Activated naive CD4-positive, alpha-beta T cell treated with anti-CD3 and anti-CD28 coated beads for 36 hours (primary cell): ENCODE measurements at regions of chr1 and their contacts with region 1.

Region 1: GRCh38 chr1:174159252-174160108 is at the start of gene RABGAP1L:
- DNase-seq: peak; percentile 94
- H3K4me3 Mint-ChIP-seq: peak within 1 kb of the TSS; percentile 83
- H3K27ac Mint-ChIP-seq: peak within 1 kb of the TSS; percentile 93
- H3K4me1 Mint-ChIP-seq: peaks cover 56% of the 10 kb centered on the region
- H3K27me3 Mint-ChIP-seq: no peaks in the 10 kb centered on the region
- total RNA-seq, gene RABGAP1L: 16.6 TPM

Region 2: DNA sequence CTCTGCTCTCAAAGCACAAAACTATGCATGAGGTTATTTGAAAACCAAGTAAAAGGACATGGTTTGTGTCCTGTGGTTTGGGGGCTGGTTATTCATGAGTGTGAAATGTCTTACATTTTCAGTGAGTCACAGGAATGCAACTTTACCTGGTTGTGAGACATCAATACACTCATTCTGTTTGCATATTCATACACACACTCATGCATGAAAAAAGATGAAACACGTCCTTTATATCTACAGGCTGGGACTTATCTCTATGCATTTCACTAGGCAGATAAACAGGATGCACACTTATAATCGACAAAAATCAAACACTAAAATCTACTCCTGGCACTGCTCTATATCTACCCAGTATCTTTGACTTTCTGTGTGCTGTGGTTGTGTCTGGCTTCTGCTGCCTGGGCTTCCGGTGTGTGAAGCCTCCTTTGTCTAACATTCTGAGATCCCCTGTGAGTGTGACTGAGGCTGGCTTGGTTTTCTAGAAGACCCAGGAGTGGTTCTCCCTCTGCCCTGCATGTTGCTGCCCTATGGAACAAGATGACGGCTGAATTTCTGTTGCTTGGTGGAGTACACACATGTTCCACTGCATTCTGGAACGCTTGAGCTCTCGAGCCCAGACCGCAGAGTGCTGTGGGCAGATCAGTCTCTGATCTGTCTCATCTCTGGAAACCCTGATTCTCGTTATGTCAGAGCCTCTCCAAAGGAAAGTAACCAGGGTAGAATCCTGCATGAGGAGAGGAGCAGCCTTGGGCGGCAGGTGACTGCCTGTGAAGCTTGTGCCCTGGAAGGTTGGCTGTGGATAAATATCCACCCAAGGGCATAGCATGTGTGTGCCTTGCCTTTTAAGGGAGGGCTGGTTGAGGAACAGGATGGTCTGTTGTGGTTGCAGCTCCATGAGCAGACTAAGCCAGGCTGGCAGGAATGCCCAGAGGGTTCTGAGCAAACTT is 1520.3 kb before region 1 on chr1:
- CTCF ChIA-PET with region 1: no interaction called
- intact Hi-C with region 1: loop called (anchors 10 kb)
- DNase-seq: peak; percentile 90
- H3K4me3 Mint-ChIP-seq: peak overlapping the region; percentile 42
- H3K27ac Mint-ChIP-seq: peak overlapping the region; percentile 93
- H3K4me1 Mint-ChIP-seq: peaks cover 73% of the 10 kb centered on the region
- H3K27me3 Mint-ChIP-seq: peaks cover 9% of the 10 kb centered on the region

Region 3: GRCh38 chr1:173202430-173203145 is 956.9 kb before region 1 on chr1:
- CTCF ChIA-PET with region 1: no interaction called
- intact Hi-C with region 1: loop called (anchors 5 kb)
- DNase-seq: peak; percentile 39
- H3K4me3 Mint-ChIP-seq: no peak overlapping the region
- H3K27ac Mint-ChIP-seq: no peak overlapping the region
- H3K4me1 Mint-ChIP-seq: peaks cover 37% of the 10 kb centered on the region
- H3K27me3 Mint-ChIP-seq: peaks cover 4% of the 10 kb centered on the region

Region 4: GRCh38 chr1:173714759-173715537 is 444.5 kb before region 1 on chr1 and contains the start of gene KLHL20:
- CTCF ChIA-PET with region 1: no interaction called
- intact Hi-C with region 1: loop called (anchors 2 kb)
- DNase-seq: peak; percentile 91
- H3K4me3 Mint-ChIP-seq: peak within 1 kb of the TSS; percentile 97
- H3K27ac Mint-ChIP-seq: peak within 1 kb of the TSS; percentile 96
- H3K4me1 Mint-ChIP-seq: peaks cover 9% of the 10 kb centered on the region
- H3K27me3 Mint-ChIP-seq: peaks cover 15% of the 10 kb centered on the region
- total RNA-seq, gene KLHL20: 13.0 to 14.9 TPM

Region 5: GRCh38 chr1:174022080-174022975 is 137.2 kb before region 1 on chr1 and contains the start of gene RC3H1:
- CTCF ChIA-PET with region 1: no interaction called
- intact Hi-C with region 1: loop called (anchors 1 kb)
- DNase-seq: peak; percentile 92
- H3K4me3 Mint-ChIP-seq: peak within 1 kb of the TSS; percentile 93
- H3K27ac Mint-ChIP-seq: peak within 1 kb of the TSS; percentile 94
- H3K4me1 Mint-ChIP-seq: peaks cover 32% of the 10 kb centered on the region
- H3K27me3 Mint-ChIP-seq: no peaks in the 10 kb centered on the region
- total RNA-seq, gene RC3H1: 24.2 to 27.1 TPM

Region 6: DNA sequence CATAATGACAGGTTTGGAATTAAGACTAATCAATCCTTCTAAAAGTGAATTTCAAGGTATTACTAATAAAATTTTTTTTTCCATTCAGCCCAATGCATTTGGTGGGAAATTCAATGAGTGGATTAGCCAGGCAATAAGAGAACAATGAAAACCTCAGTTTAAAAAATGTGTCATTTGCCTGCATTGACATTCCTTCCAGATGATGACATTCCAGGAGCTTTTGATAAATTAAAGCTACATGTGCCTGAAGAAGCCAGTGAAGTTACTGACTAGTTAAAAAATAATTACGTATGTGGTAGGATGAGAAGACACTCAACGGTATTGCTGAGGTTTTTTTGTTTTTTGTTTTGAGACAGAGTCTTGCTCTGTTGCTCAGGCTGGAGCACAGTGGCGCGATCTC is 99.4 kb before region 1 on chr1:
- CTCF ChIA-PET with region 1: no interaction called
- intact Hi-C with region 1: no loop called
- DNase-seq: no peak
- H3K4me3 Mint-ChIP-seq: no peak overlapping the region
- H3K27ac Mint-ChIP-seq: no peak overlapping the region
- H3K4me1 Mint-ChIP-seq: no peaks in the 10 kb centered on the region
- H3K27me3 Mint-ChIP-seq: no peaks in the 10 kb centered on the region

Region 7: DNA sequence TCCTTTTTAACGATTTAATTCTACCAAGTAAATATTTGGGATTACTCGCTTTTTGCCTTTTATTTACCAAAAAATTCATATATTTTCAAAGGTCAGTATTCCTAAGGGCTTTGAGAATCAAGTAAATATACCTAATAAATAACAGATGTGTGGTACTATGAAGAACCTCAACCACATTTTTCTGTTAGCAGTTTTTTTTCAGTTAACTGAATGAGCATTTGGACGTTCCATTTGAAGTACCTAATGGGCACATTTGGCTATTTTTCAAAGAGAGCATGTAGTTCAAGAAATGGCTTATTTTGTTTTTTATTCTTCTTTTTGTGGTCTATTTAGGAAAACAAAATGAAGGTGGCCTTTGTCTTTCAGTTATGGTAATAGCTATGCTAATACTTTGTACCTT is 541.3 kb after region 1 on chr1:
- CTCF ChIA-PET with region 1: no interaction called
- intact Hi-C with region 1: no loop called
- DNase-seq: no peak
- H3K4me3 Mint-ChIP-seq: no peak overlapping the region
- H3K27ac Mint-ChIP-seq: no peak overlapping the region
- H3K4me1 Mint-ChIP-seq: no peaks in the 10 kb centered on the region
- H3K27me3 Mint-ChIP-seq: no peaks in the 10 kb centered on the region

Region 8: DNA sequence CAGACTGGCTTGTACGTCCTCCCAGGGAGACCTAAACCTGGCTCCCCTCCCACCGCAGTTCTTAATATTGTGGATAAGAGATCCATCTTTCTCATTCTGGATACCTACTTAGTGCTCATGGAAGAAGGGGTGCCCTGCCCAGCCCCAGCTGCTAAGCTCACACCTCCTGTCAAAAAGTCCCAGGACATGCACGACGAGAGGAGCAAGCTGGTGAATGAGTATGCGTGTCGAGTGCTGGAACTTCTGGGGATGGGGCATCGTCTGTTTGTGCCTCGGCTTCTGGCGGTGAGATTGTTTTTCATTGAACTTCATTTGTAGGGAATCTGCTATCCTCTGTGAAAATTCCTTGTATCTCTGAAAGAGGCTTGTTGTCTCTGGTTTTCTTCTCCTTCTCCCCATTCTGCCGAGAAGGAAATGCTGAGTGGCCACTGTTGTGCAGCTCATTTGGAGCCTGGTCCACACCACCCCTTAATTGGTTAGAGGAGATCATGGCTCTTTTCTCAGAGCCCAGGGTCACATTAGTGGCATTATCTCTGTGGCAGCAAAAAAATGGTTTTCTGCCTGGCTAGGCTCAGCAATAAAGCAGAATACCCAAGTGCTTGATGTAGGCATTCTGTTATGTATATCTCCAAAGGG is 640.9 kb after region 1 on chr1:
- CTCF ChIA-PET with region 1: no interaction called
- intact Hi-C with region 1: loop called (anchors 2 kb)
- DNase-seq: peak; percentile 47
- H3K4me3 Mint-ChIP-seq: no peak overlapping the region
- H3K27ac Mint-ChIP-seq: no peak overlapping the region
- H3K4me1 Mint-ChIP-seq: peaks cover 8% of the 10 kb centered on the region
- H3K27me3 Mint-ChIP-seq: no peaks in the 10 kb centered on the region